ENCODE measurements at regions of chr1 and their contacts with region 1.

Region 1: GRCh38 chr1:105492921-105493320 is 1563.6 kb upstream of the PRMT6 start:
- DNase-seq: no peak
- ATAC-seq: no peak
- H3K4me3 ChIP-seq: no peak overlapping the region
- H3K27ac ChIP-seq: no peak overlapping the region
- H3K4me1 ChIP-seq: no peaks in the 10 kb centered on the region
- H3K27me3 ChIP-seq: no peaks in the 10 kb centered on the region
- CTCF ChIP-seq: no peak

Region 2: GRCh38 chr1:106473937-106474336 is 981.0 kb after region 1 on chr1:
- intact Hi-C with region 1: loop called in 1 of 10 experiments (anchors 5 kb)
- DNase-seq: no peak
- ATAC-seq: no peak
- H3K4me3 ChIP-seq: no peak overlapping the region
- H3K27ac ChIP-seq: no peak overlapping the region
- H3K4me1 ChIP-seq: no peaks in the 10 kb centered on the region
- H3K27me3 ChIP-seq: no peaks in the 10 kb centered on the region
- CTCF ChIP-seq: no peak